ENCODE measurements at regions of chr5 and their contacts with region 1.

Region 1: GRCh38 chr5:177497292-177498033 is at the start of gene PDLIM7:
- DNase-seq: peak; percentile 97
- ATAC-seq: peak; percentile 83
- H3K4me3 Mint-ChIP-seq: peak within 1 kb of the TSS; percentile 80
- H3K27ac Mint-ChIP-seq: peak within 1 kb of the TSS; percentile 39
- H3K4me1 Mint-ChIP-seq: peaks cover 79% of the 10 kb centered on the region
- H3K27me3 Mint-ChIP-seq: peaks cover 2% of the 10 kb centered on the region
- CTCF ChIP-seq: no peak
- total RNA-seq, gene PDLIM7: 17.0 and 17.7 TPM in 2 replicates

Region 2: GRCh38 chr5:177317959-177318377 is 179.5 kb before region 1 on chr5:
- CTCF ChIA-PET with region 1: interaction called, 3 read pairs
- POLR2A ChIA-PET with region 1: no interaction called
- intact Hi-C with region 1: loop called (anchors 2 kb)
- DNase-seq: peak; percentile 48
- ATAC-seq: peak; percentile 87
- H3K4me3 Mint-ChIP-seq: no peak overlapping the region
- H3K27ac Mint-ChIP-seq: no peak overlapping the region
- H3K4me1 Mint-ChIP-seq: peaks cover 15% of the 10 kb centered on the region
- H3K27me3 Mint-ChIP-seq: no peaks in the 10 kb centered on the region
- CTCF ChIP-seq: no peak

Region 3: DNA sequence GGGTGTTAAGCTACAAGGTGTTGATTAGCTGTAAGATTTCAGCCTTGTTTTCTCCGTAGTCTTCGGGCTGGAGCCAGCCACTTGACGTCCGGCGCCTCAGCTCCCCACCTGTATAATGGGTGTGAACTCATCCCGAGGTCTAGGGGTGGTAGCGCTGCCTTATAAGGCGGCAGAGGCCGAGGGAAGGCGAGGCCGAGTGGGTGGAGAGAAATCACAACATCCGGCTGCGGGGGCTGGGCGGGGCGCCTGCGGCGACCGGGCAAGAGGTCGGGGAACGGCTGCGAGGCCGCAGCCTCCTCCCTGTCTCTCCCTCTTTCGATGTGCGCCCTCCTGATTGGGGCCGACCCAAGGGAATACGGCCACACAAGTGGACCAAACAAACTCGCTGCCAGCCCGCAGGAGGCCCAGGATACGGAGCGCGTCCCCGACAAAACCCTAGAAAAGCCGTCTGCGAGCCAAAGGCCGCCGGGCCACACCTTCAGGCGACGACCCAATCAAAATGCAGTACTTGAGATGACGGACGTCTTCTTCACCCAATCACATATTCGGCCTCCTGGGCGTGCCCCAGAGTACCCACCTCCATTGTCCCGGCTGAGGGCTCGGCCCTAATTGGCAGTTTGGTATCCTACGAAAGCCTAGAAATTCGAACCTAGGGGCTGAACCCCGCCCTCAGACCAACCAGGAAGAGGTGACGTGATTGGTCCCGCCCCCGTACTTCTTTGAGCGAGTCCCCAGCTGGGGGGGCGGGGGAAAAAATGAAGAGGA is 71.5 kb before region 1 on chr5:
- CTCF ChIA-PET with region 1: no interaction called
- POLR2A ChIA-PET with region 1: interaction called, 6 read pairs
- intact Hi-C with region 1: loop called (anchors 1 kb)
- DNase-seq: peak; percentile 91
- ATAC-seq: peak; percentile 85
- H3K4me3 Mint-ChIP-seq: peak overlapping the region; percentile 91
- H3K27ac Mint-ChIP-seq: peak overlapping the region; percentile 93
- H3K4me1 Mint-ChIP-seq: peaks cover 53% of the 10 kb centered on the region
- H3K27me3 Mint-ChIP-seq: no peaks in the 10 kb centered on the region
- CTCF ChIP-seq: no peak

Region 4: DNA sequence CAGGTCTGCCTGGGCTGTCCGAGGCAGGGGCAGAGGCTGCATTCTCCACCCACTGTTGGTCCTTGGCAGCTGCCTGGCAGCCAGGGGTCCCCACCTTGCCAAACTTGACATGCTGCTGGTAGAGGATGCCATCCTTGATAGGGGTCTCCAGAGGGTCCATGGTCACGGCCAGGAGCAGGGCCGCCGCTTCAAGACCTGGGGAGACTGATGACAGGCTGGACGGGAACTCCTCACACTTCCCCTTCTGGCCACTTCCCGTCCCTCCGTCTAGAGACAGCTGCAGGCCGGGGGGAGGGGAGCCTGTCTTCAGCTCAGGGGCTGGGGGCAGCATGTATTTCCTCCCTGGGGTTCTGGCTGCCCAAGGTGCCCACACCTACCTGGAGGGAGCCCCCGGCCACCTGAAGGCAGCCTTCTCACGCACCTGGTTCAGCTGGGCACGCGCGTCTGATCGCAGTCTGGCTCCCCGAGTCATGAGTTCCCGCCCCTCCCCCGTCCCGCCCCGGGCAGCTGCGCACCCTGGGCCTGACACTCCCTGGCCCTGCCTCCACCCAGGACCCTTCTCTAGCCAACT is 12.0 kb after region 1 on chr5 and contains the start of gene DOK3:
- CTCF ChIA-PET with region 1: interaction called, 21 read pairs
- POLR2A ChIA-PET with region 1: interaction called, 96 read pairs
- intact Hi-C with region 1: loop called (anchors 1 kb)
- DNase-seq: peak; percentile 52
- ATAC-seq: peak; percentile 33
- H3K4me3 Mint-ChIP-seq: peak within 1 kb of the TSS; percentile 93
- H3K27ac Mint-ChIP-seq: peak within 1 kb of the TSS; percentile 96
- H3K4me1 Mint-ChIP-seq: peaks cover 60% of the 10 kb centered on the region
- H3K27me3 Mint-ChIP-seq: no peaks in the 10 kb centered on the region
- CTCF ChIP-seq: no peak
- total RNA-seq, gene DOK3: 82.5 and 88.5 TPM in 2 replicates

Region 5: DNA sequence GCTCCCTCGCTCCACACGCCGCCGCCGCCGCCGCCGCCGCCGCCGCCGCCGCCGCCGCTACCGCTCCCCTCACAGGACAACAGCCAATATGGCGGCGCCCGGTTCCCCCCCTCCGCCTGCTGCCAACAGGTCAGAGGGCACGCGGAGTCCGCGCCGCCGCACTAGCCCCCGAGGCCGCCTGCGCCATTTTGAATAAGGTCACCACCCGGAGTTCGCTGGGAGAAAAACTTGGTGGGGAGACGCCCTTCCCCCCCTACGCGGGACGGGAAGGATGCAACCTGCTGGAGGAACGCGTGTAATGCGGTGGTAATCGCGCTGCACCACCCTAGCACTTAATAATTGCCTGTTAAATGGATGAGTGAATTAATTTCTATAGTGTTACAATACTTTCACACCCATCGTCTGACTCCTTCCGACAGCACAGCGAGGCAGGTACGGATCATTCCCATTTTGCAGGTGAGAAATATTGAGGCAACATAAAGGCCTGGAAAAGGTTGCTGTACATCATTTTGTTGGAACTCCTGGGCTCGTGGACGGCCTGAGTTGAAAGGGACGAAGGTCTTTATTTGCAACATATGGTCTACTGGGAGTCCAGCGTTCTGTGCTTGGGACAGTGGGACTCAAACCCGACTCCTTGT is 57.1 kb after region 1 on chr5 and contains the start of gene FAM193B:
- CTCF ChIA-PET with region 1: no interaction called
- POLR2A ChIA-PET with region 1: no interaction called
- intact Hi-C with region 1: loop called (anchors 1 kb)
- DNase-seq: peak; percentile 93
- ATAC-seq: peak; percentile 99
- H3K4me3 Mint-ChIP-seq: peak within 1 kb of the TSS; percentile 88
- H3K27ac Mint-ChIP-seq: peak within 1 kb of the TSS; percentile 77
- H3K4me1 Mint-ChIP-seq: peaks cover 29% of the 10 kb centered on the region
- H3K27me3 Mint-ChIP-seq: no peaks in the 10 kb centered on the region
- CTCF ChIP-seq: no peak
- total RNA-seq, gene FAM193B: 108 and 121 TPM in 2 replicates

Measured in activated B cell treated with CpG ODN at 0.5 μM for 24 hours (primary cell).